Common myeloid progenitor, CD34-positive (primary cell): ENCODE measurements at regions of chr4 and their contacts with region 1.

Region 1: GRCh38 chr4:10403633-10404445 is 53.4 kb downstream of the ZNF518B start:
- DNase-seq: peak; percentile 56 to 77 (median 74)
- H3K4me3 ChIP-seq: no peak overlapping the region
- H3K27ac ChIP-seq: no peak overlapping the region
- H3K4me1 ChIP-seq: no peaks in the 10 kb centered on the region
- H3K27me3 ChIP-seq: no peaks in the 10 kb centered on the region

Region 2: DNA sequence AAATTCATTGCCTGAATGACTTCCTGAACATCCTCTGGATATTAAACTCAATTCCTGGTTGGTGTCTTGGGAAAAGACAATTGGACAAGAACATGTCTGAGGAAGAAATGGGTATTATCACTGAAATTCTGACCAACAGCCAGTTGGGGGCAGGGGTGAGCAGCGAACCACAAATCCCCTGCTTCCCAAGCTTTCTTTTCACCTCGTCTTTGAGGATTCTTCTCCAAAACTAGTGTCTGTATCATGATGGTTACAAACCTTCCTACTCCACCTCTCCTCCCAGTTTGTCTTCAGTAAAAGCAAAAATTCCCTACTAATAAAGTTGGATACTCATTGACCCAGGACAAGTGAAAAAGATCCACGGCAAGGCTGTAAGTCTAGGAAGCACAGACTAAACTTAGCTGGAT is 239.0 kb before region 1 on chr4:
- CTCF ChIA-PET with region 1: interaction called, 211 read pairs
- POLR2A ChIA-PET with region 1: interaction called, 6 read pairs
- DNase-seq: peak in 2 of 3 donors; percentile 35 to 43
- H3K4me3 ChIP-seq: no peak overlapping the region
- H3K27ac ChIP-seq: no peak overlapping the region
- H3K4me1 ChIP-seq: peaks cover 0 to 9% (median 5%) of the 10 kb centered on the region in 4 experiments
- H3K27me3 ChIP-seq: no peaks in the 10 kb centered on the region

Region 3: DNA sequence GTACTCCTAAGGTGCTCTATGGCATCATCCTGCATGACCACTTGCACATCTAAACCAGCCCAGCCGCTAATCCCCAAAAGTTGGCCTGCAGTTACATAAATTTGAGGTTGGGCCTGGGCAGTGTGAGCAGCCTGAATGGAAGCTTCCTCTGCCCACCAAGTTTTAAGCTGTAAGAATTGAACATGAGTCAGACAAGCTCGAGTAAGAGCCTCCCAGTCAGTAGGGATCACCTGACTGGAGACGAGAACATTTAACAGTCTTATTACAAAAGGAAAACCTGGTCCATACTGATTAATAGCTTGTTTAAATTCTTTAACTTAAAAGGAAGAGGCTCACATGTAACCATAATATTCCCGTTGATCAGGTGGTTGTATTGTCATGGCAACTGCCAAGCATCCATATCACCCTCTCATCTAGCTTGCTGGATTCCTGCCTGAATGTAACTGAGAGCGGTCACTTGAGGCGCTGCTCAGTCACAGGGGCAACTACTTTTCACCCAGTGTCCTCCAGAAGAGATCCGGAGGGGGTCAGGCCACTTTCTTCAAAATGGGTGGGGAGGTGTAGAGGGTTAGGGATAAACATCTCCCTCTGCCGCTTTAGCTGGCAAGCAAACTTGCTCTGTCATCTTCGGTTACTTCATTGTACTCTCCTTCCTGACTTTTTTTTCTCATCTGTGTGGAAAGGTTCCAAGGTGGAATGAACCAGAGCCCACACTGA is 230.6 kb before region 1 on chr4:
- CTCF ChIA-PET with region 1: interaction called, 54 read pairs
- POLR2A ChIA-PET with region 1: no interaction called
- DNase-seq: peak; percentile 77 to 91 (median 81)
- H3K4me3 ChIP-seq: no peak overlapping the region
- H3K27ac ChIP-seq: peak overlapping the region; percentile 1 to 75
- H3K4me1 ChIP-seq: peaks cover 0 to 29% (median 15%) of the 10 kb centered on the region in 4 experiments
- H3K27me3 ChIP-seq: no peaks in the 10 kb centered on the region

Region 4: GRCh38 chr4:10384974-10385373 is 18.9 kb before region 1 on chr4:
- CTCF ChIA-PET with region 1: interaction called, 15 read pairs
- POLR2A ChIA-PET with region 1: no interaction called
- DNase-seq: no peak
- H3K4me3 ChIP-seq: no peak overlapping the region
- H3K27ac ChIP-seq: no peak overlapping the region
- H3K4me1 ChIP-seq: no peaks in the 10 kb centered on the region
- H3K27me3 ChIP-seq: peaks cover 0 to 1% (median 0%) of the 10 kb centered on the region in 5 experiments

Region 5: DNA sequence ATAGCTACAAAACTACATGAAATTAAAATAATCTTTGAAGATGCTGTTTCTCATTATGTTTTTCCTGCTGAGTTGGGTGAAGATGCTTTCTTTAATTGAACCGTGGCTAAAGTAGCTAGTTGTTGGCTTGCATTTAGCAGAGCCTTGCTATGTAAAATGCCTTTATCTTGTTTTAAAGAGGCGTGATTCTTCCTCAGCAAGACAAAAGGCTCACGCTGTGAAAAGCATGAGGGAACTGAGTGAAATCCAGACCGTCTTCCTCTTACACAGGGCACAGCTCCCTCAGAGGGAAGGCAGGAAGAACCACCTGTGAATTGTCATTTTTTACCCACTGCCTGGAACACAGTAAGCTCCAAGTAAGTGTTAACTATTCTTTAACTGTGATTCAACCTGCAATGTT is 92.4 kb after region 1 on chr4:
- CTCF ChIA-PET with region 1: no interaction called
- POLR2A ChIA-PET with region 1: no interaction called
- DNase-seq: no peak
- H3K4me3 ChIP-seq: no peak overlapping the region
- H3K27ac ChIP-seq: no peak overlapping the region
- H3K4me1 ChIP-seq: no peaks in the 10 kb centered on the region
- H3K27me3 ChIP-seq: no peaks in the 10 kb centered on the region